ENCODE measurements at regions of chr12 and their contacts with region 1.

Region 1: DNA sequence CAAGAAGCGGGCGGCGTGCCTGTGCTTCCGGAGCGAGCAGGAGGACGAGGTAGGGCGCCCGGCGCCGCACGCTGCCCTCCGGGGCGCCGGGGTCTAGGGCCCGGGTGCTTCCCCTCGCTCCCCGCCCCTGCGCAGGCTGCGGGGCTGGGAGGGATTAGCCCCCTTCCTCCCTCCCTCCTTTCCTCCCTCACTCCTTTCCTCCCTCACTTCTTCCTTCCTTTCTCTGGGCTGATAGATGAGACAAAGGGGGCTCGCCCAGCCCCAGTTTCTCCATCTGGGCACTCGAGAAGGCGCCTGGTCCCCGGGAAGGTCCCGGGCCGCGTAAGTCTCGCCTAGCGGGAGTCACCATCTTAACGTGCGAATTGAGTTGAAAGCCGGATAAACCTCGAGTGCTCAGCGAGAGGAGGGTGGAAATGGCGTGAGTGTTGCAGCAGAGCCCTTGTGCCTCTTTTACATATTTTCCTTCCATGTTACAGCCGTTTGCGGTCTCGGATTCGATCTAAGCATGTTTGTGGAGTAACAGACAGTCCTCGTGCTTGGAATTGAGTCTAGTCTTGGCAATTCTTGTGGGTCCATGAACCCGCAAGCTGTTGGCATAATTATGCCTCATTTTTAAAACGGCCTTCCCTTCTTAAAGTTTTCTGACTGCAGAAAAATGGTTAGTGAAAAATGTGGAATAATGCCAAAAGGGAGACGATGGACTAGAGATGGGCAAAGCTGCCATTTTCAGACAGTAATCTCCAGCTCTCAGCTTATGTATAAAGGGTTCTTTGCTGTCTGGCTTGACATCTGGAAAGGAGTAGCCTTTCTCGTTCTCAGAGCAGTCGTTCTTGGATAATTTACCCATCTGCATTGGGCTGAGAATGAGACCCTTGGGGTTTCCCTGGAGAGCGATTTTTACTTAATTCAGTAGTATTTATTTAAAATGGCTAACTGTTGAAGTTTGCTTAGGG is 924 bp downstream of the NUDT4 start:
- DNase-seq: no peak
- H3K4me3 ChIP-seq: peak overlapping the region; percentile 87 to 93
- H3K27ac ChIP-seq: peak overlapping the region; percentile 94 to 97
- H3K4me1 ChIP-seq: no peaks in the 10 kb centered on the region
- H3K27me3 ChIP-seq: no peaks in the 10 kb centered on the region
- CTCF ChIP-seq: no peak
- POLR2A ChIP-seq: no peak

Region 2: GRCh38 chr12:92928962-92929915 is 449.4 kb before region 1 on chr12 and contains the start of gene EEA1:
- intact Hi-C with region 1: loop called (anchors 5 kb)
- DNase-seq: peak; percentile 97
- H3K4me3 ChIP-seq: peak within 1 kb of the TSS; percentile 85
- H3K27ac ChIP-seq: peak within 1 kb of the TSS; percentile 93 to 98
- H3K4me1 ChIP-seq: no peaks in the 10 kb centered on the region
- H3K27me3 ChIP-seq: no peaks in the 10 kb centered on the region
- CTCF ChIP-seq: peak in 3 of 4 experiments; percentile 21 to 51 (median 34)
- POLR2A ChIP-seq: peak; percentile 94
- total RNA-seq, gene EEA1: 18.6 to 22.6 TPM

Region 3: DNA sequence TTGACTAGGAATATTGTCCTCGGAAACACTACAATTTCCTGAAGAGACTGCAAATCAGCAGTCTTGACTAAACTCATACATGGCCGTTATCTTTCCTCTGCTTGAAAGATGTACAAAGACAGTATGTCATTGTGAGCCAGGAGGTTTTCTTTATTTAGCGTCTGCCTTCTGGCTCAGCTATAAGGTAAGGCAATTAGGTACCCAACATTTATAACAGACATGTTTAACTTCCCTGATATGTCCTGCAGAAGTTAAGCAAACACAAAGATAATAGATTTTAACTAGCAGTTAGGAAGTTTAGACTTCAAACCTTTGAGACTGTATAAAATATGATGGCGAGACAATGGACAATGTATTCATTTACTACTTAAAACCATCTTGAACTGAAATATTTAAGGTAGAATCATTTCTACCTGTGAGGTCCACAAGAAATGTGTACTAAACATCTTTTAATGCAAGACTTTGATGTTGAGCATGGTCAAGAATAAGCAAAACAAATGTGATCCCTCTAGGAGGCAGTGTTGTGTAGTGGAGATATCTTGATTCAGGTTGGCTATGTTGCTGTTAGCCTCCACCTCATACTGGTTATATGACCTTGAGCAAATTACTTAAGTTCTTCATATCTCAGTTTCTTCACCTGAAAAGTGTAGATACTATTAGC is 353.4 kb before region 1 on chr12:
- intact Hi-C with region 1: loop called (anchors 10 kb)
- DNase-seq: peak; percentile 21
- H3K4me3 ChIP-seq: no peak overlapping the region
- H3K27ac ChIP-seq: peak overlapping the region in 1 of 2 donors; percentile 39
- H3K4me1 ChIP-seq: peaks cover under 1% of the 10 kb centered on the region
- H3K27me3 ChIP-seq: no peaks in the 10 kb centered on the region
- CTCF ChIP-seq: peak in 3 of 4 experiments; percentile 44 to 55 (median 53)
- POLR2A ChIP-seq: no peak

Region 4: GRCh38 chr12:93127582-93128331 is 250.9 kb before region 1 on chr12:
- intact Hi-C with region 1: loop called (anchors 5 kb)
- DNase-seq: peak; percentile 85
- H3K4me3 ChIP-seq: no peak overlapping the region
- H3K27ac ChIP-seq: peak overlapping the region; percentile 74 to 75
- H3K4me1 ChIP-seq: no peaks in the 10 kb centered on the region
- H3K27me3 ChIP-seq: no peaks in the 10 kb centered on the region
- CTCF ChIP-seq: peak in 3 of 4 experiments; percentile 0 to 61 (median 22)
- POLR2A ChIP-seq: no peak

Region 5: DNA sequence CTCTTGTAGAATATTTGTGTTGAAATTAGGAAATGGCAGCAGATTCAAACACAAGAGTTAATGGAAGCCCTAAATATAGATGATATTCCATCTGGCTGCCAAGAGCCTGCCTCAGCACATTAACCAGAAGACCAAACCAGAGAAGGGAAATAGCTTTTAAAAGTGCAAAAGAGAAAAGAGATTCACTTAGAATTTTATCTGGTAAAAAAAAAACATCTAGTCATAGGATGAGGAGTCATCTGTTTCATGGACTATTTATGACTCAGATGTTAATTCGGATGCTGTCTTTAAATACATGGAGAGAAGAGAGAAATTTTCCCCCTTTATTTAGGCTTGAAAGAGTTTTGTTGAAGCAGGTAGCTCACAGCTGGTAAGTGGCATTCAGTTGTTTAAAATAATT is 202.5 kb before region 1 on chr12:
- intact Hi-C with region 1: loop called (anchors 5 kb)
- DNase-seq: no peak
- H3K4me3 ChIP-seq: no peak overlapping the region
- H3K27ac ChIP-seq: peak overlapping the region; percentile 51 to 67
- H3K4me1 ChIP-seq: peaks cover 9% of the 10 kb centered on the region
- H3K27me3 ChIP-seq: no peaks in the 10 kb centered on the region
- CTCF ChIP-seq: no peak
- POLR2A ChIP-seq: no peak

Measured in prostate gland (tissue), 2 donors.